PC-9 (cell line): ENCODE measurements at regions of chr6 and their contacts with region 1.

Region 1: DNA sequence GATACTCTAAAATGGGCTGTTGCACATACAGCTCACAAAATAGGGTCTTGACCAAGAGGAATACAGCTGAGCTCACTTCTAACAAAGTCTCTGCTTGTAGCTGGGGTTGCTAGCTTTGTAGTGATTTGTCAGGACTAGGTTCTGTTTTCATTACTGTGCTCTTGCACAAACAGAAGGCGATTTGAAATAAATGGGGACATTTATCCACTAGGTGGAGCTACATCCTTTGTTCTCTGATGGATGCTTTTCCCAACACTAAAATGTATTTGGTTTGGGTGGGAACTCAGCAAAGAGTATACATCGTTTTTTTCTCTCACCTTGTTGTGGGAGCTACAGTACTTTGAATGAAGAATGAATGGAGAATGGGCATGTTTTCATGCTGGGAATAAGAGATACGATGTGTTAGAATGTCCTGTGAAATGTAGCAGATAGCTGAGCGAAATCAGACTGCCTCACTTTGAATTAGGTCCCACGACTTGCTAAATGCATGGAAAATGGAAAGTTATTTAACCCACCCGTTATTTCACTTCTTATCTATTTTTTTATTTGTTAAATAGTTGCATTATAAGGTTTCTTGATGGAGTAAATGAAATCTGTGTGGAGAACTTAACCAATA is 494.7 kb upstream of the MAP3K7 start:
- DNase-seq: no peak
- H3K4me3 ChIP-seq: no peak overlapping the region
- H3K27ac ChIP-seq: no peak overlapping the region
- H3K4me1 ChIP-seq: no peaks in the 10 kb centered on the region
- H3K27me3 ChIP-seq: no peaks in the 10 kb centered on the region
- CTCF ChIP-seq: peak; percentile 61

Region 2: DNA sequence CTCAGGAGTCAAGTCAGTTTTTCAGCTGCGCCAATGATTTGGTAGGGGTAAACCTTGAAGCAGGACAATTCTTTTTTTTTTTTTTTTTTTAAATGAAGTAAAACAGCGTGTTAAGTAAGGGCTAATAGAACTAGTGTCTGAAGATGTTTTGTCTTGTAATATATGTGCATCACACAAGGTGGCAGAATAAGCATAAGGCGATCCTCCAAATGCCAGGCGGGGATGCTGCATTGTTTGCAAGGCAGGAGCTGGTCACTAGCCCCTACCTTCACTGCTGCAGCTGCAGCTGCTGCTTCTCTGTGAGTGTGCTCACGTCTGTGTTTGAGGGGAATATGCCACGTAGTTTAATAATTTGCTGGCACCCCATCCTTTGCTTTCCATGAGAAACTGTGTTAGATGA is 221.9 kb before region 1 on chr6:
- CTCF ChIA-PET with region 1: no interaction called
- POLR2A ChIA-PET with region 1: no interaction called
- intact Hi-C with region 1: loop called (anchors 10 kb)
- DNase-seq: peak in 1 of 2 experiments; percentile 21
- H3K4me3 ChIP-seq: no peak overlapping the region
- H3K27ac ChIP-seq: no peak overlapping the region
- H3K4me1 ChIP-seq: no peaks in the 10 kb centered on the region
- H3K27me3 ChIP-seq: no peaks in the 10 kb centered on the region
- CTCF ChIP-seq: no peak

Region 3: GRCh38 chr6:91392951-91393350 is 311.4 kb after region 1 on chr6:
- CTCF ChIA-PET with region 1: no interaction called
- POLR2A ChIA-PET with region 1: no interaction called
- intact Hi-C with region 1: no loop called
- DNase-seq: no peak
- H3K4me3 ChIP-seq: no peak overlapping the region
- H3K27ac ChIP-seq: no peak overlapping the region
- H3K4me1 ChIP-seq: no peaks in the 10 kb centered on the region
- H3K27me3 ChIP-seq: no peaks in the 10 kb centered on the region
- CTCF ChIP-seq: no peak

Region 4: DNA sequence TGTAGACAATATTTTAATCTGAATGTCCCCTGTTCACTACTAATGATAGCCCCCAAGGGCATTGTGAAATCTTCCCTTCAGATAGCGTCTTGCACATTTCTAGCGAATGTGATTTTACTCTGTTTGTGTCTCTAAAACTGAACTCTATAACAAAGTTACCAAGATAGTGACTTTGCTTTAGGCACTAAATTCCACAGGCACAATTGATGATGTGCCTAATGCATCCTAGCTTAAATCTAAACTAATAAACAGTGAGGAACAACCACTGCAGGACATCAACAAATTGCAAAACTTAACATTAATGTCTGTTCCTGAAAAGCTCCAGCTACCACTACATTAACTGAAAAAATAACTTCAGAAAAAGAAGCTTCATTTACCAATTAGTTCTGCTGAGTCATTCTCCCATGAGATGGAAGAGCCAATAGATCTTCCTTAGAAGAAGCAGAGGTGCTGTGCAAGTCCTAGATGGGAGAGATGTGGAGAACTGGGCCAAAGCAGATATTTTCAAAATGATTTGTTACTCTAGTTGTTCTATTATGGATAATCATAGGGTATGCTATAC is 1272.8 kb after region 1 on chr6:
- CTCF ChIA-PET with region 1: no interaction called
- POLR2A ChIA-PET with region 1: interaction called, 13 read pairs
- intact Hi-C with region 1: no loop called
- DNase-seq: no peak
- H3K4me3 ChIP-seq: no peak overlapping the region
- H3K27ac ChIP-seq: no peak overlapping the region
- H3K4me1 ChIP-seq: no peaks in the 10 kb centered on the region
- H3K27me3 ChIP-seq: no peaks in the 10 kb centered on the region
- CTCF ChIP-seq: no peak

Region 5: DNA sequence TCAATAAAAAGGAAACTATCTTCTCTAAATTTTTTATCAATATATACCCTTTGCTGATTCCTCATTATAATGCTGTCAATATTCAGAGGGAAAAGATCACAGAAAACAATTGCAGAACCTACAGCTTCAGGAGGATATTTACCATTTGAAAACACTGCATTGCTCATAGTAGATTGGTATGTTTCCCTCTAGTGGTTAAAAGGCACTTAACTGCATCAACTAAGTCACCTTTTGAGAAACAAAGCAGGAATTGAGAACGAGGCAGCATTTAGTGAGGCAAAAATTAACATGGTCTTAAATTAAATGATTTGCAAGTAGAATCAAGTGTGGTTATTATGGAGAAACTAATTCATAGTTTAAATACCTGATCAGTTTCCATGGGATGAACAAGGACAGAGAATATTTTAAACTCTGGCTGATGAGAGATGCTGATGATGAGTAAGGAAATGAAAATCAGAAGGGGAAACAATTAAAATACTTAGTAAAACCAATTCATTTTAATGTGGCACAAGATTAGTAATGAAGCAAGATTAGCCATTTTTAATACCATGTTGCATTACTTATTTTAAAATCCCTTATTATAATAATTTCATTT is 1695.7 kb after region 1 on chr6:
- CTCF ChIA-PET with region 1: no interaction called
- POLR2A ChIA-PET with region 1: no interaction called
- intact Hi-C with region 1: loop called (anchors 5 kb)
- DNase-seq: no peak
- H3K4me3 ChIP-seq: no peak overlapping the region
- H3K27ac ChIP-seq: no peak overlapping the region
- H3K4me1 ChIP-seq: no peaks in the 10 kb centered on the region
- H3K27me3 ChIP-seq: no peaks in the 10 kb centered on the region
- CTCF ChIP-seq: peak; percentile 40